Heart left ventricle (tissue), 16 donors: ENCODE measurements at regions of chr5 and their contacts with region 1.

Region 1: DNA sequence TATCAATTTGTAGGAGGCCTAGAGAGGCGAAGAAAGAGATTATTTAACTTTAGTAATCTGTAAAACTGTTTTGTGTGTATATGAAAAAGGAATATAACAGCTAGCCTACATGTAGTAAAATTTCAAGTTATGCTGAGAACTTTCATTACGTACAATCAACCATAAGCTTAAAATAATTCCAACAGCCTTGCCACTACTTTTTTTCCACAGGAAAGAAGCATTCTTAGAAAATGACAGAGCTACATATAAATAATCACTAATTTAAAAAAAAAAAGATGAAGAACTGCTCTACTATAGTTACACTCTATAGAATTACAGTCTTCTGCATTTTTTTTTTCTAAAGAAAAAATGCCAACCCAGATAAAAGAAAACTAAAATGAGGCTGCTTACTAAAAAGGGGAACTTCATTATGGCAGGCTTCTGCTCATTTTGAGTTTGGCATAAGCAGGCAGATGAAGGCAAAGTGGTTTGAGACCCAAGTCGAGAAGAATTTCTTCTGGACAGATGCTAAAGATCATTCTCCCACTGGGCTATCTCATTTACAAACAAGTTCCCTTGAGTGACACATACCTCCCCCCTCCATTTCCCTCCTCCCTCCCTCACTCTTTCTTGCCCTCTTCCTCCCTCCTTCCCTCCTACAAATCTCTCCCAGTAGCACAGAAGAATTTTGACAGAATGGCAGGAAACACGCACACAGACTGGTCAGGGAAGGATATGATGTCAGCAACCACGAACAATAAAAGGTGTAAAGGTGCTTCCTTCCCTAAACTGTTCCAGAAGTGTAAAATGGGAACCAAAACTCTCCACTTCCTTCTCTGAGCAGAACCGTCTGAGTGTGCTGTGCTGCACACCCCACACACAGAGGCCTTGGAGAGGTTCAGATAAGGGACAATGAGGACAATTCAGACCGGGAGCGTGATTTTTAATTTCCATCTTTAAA is 56.1 kb downstream of the MEF2C start:
- DNase-seq: peak in 4 of 5 donors; percentile 48 to 78 (median 58)
- ATAC-seq: peak; percentile 80 to 94 (median 88)
- H3K4me3 ChIP-seq: peak overlapping the region in 9 of 12 donors; percentile 4 to 34 (median 19)
- H3K27ac ChIP-seq: peak overlapping the region; percentile 62 to 88 (median 82)
- H3K4me1 ChIP-seq: peaks cover 9 to 92% (median 73%) of the 10 kb centered on the region in 12 donors
- H3K27me3 ChIP-seq: no peaks in the 10 kb centered on the region
- CTCF ChIP-seq: no peak
- POLR2A ChIP-seq: peak in 1 of 2 donors; percentile 57

Region 2: DNA sequence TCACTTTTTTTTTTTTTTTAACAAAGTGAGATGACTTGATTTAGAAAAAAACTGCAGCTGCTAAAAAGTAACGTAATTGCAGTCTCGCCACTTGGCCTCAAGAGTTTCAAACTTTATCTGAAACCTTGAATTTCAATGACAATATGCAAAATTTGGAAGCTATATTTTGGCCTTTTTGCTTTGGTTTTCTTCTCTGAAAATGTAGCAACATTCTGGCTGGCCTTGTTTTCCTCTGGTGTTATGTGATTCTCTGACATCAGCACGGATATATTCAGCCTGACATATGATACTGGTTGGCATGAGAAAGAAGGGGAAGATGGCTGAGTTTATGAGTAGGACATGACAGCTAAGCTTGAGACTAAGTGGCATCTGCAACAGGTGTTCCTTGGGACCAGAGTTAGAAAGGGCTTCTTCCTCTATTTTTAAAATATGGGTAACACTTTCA is 80.5 kb before region 1 on chr5:
- intact Hi-C with region 1: loop called in 2 of 10 experiments (anchors 5 to 10 kb)
- DNase-seq: no peak
- ATAC-seq: peak in 2 of 4 donors; percentile 47 to 56
- H3K4me3 ChIP-seq: no peak overlapping the region
- H3K27ac ChIP-seq: no peak overlapping the region
- H3K4me1 ChIP-seq: peaks cover 0 to 26% (median 13%) of the 10 kb centered on the region in 12 donors
- H3K27me3 ChIP-seq: no peaks in the 10 kb centered on the region
- CTCF ChIP-seq: no peak
- POLR2A ChIP-seq: no peak